Motor neuron (in vitro differentiated cells): ENCODE measurements at regions of chr7 and their contacts with region 1.

Region 1: DNA sequence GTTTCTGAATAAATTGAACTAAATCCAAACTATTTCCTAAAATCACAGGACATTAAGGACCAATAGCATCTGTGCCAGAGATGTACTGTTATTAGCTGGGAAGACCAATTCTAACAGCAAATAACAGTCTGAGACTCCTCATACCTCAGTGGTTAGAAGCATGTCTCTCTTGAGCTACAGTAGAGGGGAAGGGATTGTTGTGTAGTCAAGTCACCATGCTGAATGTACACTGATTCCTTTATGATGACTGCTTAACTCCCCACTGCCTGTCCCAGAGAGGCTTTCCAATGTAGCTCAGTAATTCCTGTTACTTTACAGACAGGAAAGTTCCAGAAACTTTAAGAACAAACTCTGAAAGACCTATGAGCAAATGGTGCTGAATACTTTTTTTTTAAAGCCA is 13.9 kb downstream of the MEST start:
- ATAC-seq: no peak
- H3K4me3 ChIP-seq: no peak overlapping the region
- H3K27ac ChIP-seq: no peak overlapping the region
- H3K4me1 ChIP-seq: no peaks in the 10 kb centered on the region

Region 2: DNA sequence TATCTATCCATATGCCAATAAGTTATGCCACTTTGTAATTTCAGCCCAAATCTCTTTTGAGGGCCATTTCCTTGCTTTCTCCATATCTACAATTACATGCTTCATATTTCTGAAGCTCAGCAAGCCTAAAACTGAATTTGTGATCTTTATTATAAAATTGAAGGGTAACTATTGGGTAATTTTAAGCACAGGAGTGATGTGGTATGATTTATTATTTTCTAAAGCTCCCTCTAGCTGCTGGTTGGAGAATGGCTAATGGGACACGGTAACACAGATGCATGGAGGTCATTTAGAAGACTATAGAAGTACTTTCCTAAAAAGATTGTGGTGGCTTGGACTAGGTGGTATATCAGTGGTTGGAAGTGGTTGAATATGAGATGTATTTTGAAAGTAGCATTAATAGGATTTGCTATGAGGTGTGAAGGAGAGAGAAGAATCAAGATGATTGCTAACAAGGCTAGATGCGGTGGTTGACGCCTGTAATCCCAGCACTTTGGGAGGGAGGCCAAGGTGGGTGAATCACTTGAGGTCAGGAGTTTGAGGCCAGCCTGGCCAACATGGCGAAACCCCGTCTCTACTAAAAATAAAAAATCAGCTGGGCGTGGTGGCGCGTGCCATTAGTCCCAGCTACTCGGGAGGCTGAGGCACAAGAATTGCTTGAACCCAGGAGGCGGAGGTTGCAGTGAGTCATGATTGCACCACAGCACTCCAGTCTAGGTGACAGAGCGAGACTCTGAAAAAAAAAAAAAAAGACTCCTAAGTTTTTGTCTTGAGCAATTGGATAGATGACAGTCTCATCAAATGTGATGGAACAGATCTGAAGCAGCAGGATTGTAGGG is 421.5 kb before region 1 on chr7:
- in situ Hi-C with region 1: loop called in 1 of 9 experiments (anchors 25 kb)
- ATAC-seq: no peak
- H3K4me3 ChIP-seq: no peak overlapping the region
- H3K27ac ChIP-seq: no peak overlapping the region
- H3K4me1 ChIP-seq: no peaks in the 10 kb centered on the region